ENCODE measurements at regions of chr11 and their contacts with region 1.

Region 1: GRCh38 chr11:11931461-11932055 is 76.9 kb downstream of the DKK3 start:
- DNase-seq: no peak
- H3K4me3 ChIP-seq: no peak overlapping the region
- H3K27ac ChIP-seq: no peak overlapping the region
- H3K4me1 ChIP-seq: peaks cover 17% of the 10 kb centered on the region
- H3K27me3 ChIP-seq: no peaks in the 10 kb centered on the region
- CTCF ChIP-seq: peak; percentile 76

Region 2: DNA sequence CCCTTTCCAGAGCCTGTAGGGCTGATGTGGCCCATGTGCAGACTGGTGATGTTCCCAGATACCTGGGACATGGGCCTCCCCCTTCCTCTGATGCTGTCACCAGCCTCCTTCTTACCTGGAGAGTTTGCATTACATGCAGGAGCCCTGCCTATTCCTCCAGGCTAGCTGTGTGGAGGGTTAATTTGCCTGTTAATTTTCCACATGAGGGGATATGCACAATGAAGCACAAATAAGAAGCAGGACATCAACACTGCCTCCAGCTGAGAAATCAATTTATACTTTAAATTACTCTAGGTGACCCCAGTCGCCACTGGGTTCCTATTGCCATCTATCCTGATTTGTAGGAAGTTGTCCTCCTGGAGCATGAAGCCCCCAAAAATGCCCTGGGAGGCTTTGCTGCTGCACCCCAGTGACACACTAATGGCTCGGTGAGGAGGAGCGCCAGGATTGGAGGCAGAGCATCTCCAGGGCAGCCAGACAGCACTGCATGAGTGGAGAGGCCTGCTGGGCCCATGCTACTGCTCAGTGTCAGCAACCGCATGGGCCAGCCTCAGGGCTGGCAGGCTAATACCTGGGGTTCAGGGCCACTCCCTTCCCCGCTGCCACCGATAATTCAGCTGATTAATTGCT is 191.4 kb before region 1 on chr11:
- intact Hi-C with region 1: no loop called
- DNase-seq: no peak
- H3K4me3 ChIP-seq: no peak overlapping the region
- H3K27ac ChIP-seq: no peak overlapping the region
- H3K4me1 ChIP-seq: no peaks in the 10 kb centered on the region
- H3K27me3 ChIP-seq: no peaks in the 10 kb centered on the region
- CTCF ChIP-seq: no peak

Region 3: DNA sequence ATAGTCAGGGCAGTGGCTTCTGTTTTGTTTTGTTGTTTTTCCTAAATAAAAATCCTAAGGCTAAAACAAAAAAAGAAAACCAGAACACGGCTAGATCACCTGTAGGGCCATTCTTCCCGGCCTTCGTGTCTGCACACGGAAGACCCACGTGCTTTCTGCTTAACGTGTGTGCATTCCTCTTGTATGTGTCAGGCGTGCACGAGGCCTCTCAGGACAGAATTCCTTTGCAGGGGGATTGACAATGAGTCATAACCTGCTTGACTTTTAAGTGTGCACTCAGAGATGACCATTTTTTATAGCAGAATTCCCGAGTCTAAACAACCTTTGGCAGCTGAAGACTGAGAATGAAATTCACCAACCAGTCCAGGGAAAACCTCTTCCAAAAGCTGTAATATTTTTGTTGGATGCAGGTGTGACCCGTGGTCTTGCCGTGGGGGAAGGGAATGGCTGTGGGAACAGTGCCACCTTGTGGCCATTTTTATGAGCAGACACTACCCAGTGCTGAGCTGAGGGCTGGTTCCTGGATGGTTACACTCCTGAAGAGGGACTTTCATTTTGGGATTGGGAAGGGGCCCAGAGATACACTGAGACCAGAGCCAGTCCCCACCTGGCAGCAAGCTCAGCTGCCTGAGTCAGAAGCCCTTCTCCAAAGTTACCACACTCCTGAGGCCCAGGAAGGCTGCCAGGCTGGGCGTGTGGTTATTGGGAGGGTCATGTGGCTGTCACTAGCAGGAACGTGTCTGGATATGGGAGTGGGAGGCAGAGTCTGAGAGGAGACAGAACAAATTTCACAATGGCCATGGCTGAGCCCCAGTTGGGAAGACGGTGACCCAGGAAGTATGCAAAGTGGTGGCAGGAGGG is 112.6 kb after region 1 on chr11:
- intact Hi-C with region 1: loop called (anchors 5 kb)
- DNase-seq: peak; percentile 72
- H3K4me3 ChIP-seq: peak overlapping the region; percentile 22
- H3K27ac ChIP-seq: peak overlapping the region; percentile 78
- H3K4me1 ChIP-seq: peaks cover 24% of the 10 kb centered on the region
- H3K27me3 ChIP-seq: no peaks in the 10 kb centered on the region
- CTCF ChIP-seq: peak; percentile 94

Measured in left ventricle myocardium inferior (tissue), 1 donor.